ENCODE measurements at regions of chr17 and their contacts with region 1.

Region 1: DNA sequence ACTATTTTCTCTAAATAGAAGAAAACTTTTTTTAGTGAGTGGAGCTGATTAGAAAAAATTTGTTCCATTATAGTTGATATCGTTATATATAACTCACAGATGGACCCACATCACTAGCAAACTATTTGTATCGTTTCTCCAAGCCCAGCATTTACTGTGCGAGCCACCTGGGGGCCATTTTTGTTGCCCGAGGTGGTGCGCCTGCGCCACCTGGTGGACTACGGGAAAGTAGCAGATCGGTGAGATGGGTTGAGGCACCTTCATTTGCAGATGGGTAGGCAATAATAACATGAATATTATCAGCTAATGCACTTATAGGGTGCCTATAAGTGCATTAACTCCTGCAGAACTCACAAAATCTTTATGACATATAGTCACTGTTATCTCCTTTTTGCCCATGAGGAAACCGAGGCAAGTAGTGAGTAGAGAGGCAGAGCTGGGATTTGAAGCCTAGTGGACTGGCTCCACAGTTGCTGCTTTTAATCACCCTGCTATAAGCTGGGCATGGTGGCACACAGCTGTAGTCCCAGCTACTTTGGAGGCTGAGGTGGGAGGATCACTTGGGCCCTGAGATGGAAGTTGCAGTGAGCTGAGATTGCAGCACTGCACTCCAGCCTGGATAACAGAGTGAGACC is 23.2 kb upstream of the NTN1 start:
- DNase-seq: peak; percentile 61 to 90 (median 80)
- ATAC-seq: peak; percentile 85
- H3K4me3 ChIP-seq: no peak overlapping the region
- H3K4me3 Mint-ChIP-seq: no peak overlapping the region
- H3K27ac ChIP-seq: no peak overlapping the region
- H3K27ac Mint-ChIP-seq: no peak overlapping the region
- H3K4me1 ChIP-seq: peaks cover 5% of the 10 kb centered on the region
- H3K4me1 Mint-ChIP-seq: peaks cover 12% of the 10 kb centered on the region
- H3K27me3 ChIP-seq: peaks cover 7 to 14% of the 10 kb centered on the region in 2 experiments
- H3K27me3 Mint-ChIP-seq: peaks cover 32% of the 10 kb centered on the region
- CTCF ChIP-seq: peak; percentile 99

Region 2: DNA sequence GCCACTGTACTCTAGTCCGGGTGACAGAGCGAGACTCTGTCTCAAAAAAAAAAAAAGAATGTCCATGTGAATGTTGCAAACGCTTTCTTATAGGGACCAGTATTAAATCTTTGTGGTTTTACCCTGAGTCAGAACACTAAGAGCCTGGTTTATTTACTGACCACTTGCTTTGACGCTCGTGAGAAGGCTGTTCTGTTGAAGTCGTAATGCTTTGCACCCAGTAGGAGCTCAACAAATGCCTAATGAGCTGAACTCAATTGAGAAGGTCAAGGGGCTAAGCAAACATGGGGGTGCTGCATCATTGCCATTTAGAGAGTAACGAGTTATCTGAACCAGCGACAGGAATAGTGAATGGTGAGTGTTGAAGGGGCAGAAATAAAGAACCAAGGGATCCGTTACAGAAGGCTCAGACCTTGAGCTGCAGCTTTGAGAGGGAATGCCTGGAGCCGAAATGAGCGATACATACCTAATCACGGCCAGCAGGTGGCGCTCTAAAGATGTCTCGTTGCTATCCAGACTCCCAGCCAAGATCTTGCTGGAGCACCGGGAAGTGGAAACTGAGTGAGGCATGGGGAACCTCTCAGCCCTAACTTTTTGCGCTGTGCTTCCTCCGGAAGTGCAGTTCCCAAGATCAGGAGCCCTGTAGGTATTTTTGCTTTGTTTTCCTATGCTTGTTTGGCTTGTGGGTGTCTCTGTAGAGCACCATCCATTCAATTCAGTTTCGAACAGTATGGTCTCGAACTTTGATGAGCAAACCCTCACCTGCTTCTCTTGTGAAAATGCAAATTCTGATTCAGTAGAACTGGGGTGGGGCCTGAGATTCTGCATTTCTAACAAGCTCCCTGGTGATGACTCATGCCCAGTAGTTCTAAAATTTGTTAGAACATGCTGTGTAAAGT is 587.9 kb before region 1 on chr17:
- CTCF ChIA-PET with region 1: interaction called, 13 read pairs
- POLR2A ChIA-PET with region 1: no interaction called
- intact Hi-C with region 1: loop called (anchors 1 to 10 kb)
- DNase-seq: peak; percentile 47 to 88 (median 82)
- ATAC-seq: peak; percentile 92
- H3K4me3 ChIP-seq: no peak overlapping the region
- H3K4me3 Mint-ChIP-seq: no peak overlapping the region
- H3K27ac ChIP-seq: no peak overlapping the region
- H3K27ac Mint-ChIP-seq: no peak overlapping the region
- H3K4me1 ChIP-seq: peaks cover 3% of the 10 kb centered on the region
- H3K4me1 Mint-ChIP-seq: peaks cover 12% of the 10 kb centered on the region
- H3K27me3 ChIP-seq: peaks cover 0 to 3% of the 10 kb centered on the region in 2 experiments
- H3K27me3 Mint-ChIP-seq: peaks cover 9% of the 10 kb centered on the region
- CTCF ChIP-seq: peak; percentile 86

Region 3: DNA sequence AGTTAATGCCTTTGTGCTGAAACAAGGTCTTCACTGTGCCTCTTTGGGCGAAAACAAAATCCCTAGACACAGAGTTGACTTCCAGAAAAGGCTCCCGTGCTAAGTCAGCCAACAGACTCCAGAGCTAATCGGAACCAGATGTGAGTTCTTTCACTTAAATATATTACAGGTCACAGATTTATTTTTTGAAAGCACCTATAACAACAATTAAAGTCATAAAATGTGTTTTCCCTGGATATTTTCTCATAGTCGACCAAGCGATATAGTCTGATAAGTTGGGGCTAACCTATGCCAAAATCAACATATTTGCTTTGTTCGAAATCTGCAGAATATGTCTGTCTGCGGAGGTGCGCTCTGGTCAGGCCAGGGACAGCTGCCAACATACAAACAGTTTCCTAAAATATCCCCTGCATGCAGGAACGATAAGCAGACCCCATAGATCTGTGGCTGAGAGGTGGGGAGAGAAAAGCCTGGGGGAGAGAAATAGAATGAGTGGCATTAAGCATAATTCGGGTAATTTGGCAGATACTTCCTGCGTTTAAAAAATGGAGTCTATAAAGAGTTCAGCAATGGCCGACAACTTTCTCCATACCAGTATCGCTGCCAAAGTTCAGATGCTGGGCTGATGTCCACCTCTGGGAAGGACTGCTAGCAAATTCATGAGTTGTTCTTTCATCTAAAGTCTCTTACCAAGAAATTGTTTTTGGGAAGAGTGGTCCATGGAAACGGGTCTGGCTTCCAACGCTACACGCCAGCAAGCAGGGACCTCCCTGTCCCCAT is 316.8 kb before region 1 on chr17:
- CTCF ChIA-PET with region 1: no interaction called
- POLR2A ChIA-PET with region 1: no interaction called
- intact Hi-C with region 1: no loop called
- DNase-seq: no peak
- ATAC-seq: no peak
- H3K4me3 ChIP-seq: no peak overlapping the region
- H3K4me3 Mint-ChIP-seq: no peak overlapping the region
- H3K27ac ChIP-seq: no peak overlapping the region
- H3K27ac Mint-ChIP-seq: no peak overlapping the region
- H3K4me1 ChIP-seq: no peaks in the 10 kb centered on the region
- H3K4me1 Mint-ChIP-seq: no peaks in the 10 kb centered on the region
- H3K27me3 ChIP-seq: no peaks in the 10 kb centered on the region
- H3K27me3 Mint-ChIP-seq: peaks cover 18% of the 10 kb centered on the region
- CTCF ChIP-seq: no peak

Region 4: DNA sequence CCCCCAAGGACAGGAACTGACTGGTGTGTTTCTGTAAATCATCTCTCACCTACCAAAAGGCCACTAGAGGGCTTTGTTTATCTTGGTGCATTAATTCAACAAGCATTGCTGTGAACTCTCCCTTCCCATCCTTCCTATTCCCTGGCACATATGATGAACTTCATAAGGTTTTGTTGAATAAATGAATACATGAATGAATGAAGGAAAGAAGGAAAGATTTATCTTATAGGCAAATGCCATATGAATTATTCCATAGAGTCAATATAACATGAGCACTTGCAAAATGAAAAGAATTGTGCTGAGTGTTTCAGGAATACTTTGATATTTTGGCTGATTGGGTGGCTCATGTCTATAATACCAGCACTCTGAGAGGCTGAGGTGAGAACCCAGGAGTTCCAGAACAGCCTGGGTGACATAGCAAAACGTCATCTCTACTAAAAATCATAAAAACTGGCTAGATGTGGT is 244.1 kb before region 1 on chr17:
- CTCF ChIA-PET with region 1: interaction called, 9 read pairs
- POLR2A ChIA-PET with region 1: no interaction called
- intact Hi-C with region 1: loop called (anchors 1 to 2 kb)
- DNase-seq: peak in 2 of 9 experiments; percentile 19 to 40
- ATAC-seq: no peak
- H3K4me3 ChIP-seq: no peak overlapping the region
- H3K4me3 Mint-ChIP-seq: no peak overlapping the region
- H3K27ac ChIP-seq: no peak overlapping the region
- H3K27ac Mint-ChIP-seq: no peak overlapping the region
- H3K4me1 ChIP-seq: no peaks in the 10 kb centered on the region
- H3K4me1 Mint-ChIP-seq: no peaks in the 10 kb centered on the region
- H3K27me3 ChIP-seq: no peaks in the 10 kb centered on the region
- H3K27me3 Mint-ChIP-seq: peaks cover 13% of the 10 kb centered on the region
- CTCF ChIP-seq: no peak

Region 5: GRCh38 chr17:8806926-8807550 is 191.1 kb before region 1 on chr17:
- CTCF ChIA-PET with region 1: interaction called, 16 read pairs
- POLR2A ChIA-PET with region 1: no interaction called
- intact Hi-C with region 1: loop called in 1 of 2 experiments (anchors 5 kb)
- DNase-seq: peak in 1 of 9 experiments; percentile 45
- ATAC-seq: peak; percentile 31
- H3K4me3 ChIP-seq: no peak overlapping the region
- H3K4me3 Mint-ChIP-seq: no peak overlapping the region
- H3K27ac ChIP-seq: no peak overlapping the region
- H3K27ac Mint-ChIP-seq: no peak overlapping the region
- H3K4me1 ChIP-seq: no peaks in the 10 kb centered on the region
- H3K4me1 Mint-ChIP-seq: peaks cover 7% of the 10 kb centered on the region
- H3K27me3 ChIP-seq: no peaks in the 10 kb centered on the region
- H3K27me3 Mint-ChIP-seq: no peaks in the 10 kb centered on the region
- CTCF ChIP-seq: no peak

Region 6: GRCh38 chr17:8900626-8901585 is 97.2 kb before region 1 on chr17:
- CTCF ChIA-PET with region 1: interaction called, 50 read pairs
- POLR2A ChIA-PET with region 1: interaction called, 3 read pairs
- intact Hi-C with region 1: loop called in 1 of 2 experiments (anchors 2 kb)
- DNase-seq: peak in 5 of 9 experiments; percentile 21 to 60 (median 49)
- ATAC-seq: no peak
- H3K4me3 ChIP-seq: no peak overlapping the region
- H3K4me3 Mint-ChIP-seq: peak overlapping the region; percentile 29
- H3K27ac ChIP-seq: peak overlapping the region in 1 of 2 experiments; percentile 90
- H3K27ac Mint-ChIP-seq: peak overlapping the region; percentile 93
- H3K4me1 ChIP-seq: peaks cover 58% of the 10 kb centered on the region
- H3K4me1 Mint-ChIP-seq: peaks cover 59% of the 10 kb centered on the region
- H3K27me3 ChIP-seq: no peaks in the 10 kb centered on the region
- H3K27me3 Mint-ChIP-seq: no peaks in the 10 kb centered on the region
- CTCF ChIP-seq: no peak

Region 7: GRCh38 chr17:8976638-8977037 is 21.5 kb before region 1 on chr17:
- CTCF ChIA-PET with region 1: interaction called, 15 read pairs
- POLR2A ChIA-PET with region 1: no interaction called
- intact Hi-C with region 1: no loop called
- DNase-seq: no peak
- ATAC-seq: no peak
- H3K4me3 ChIP-seq: no peak overlapping the region
- H3K4me3 Mint-ChIP-seq: no peak overlapping the region
- H3K27ac ChIP-seq: no peak overlapping the region
- H3K27ac Mint-ChIP-seq: no peak overlapping the region
- H3K4me1 ChIP-seq: no peaks in the 10 kb centered on the region
- H3K4me1 Mint-ChIP-seq: no peaks in the 10 kb centered on the region
- H3K27me3 ChIP-seq: no peaks in the 10 kb centered on the region
- H3K27me3 Mint-ChIP-seq: no peaks in the 10 kb centered on the region
- CTCF ChIP-seq: no peak

Region 8: GRCh38 chr17:9009737-9010136 is 11.6 kb after region 1 on chr17:
- CTCF ChIA-PET with region 1: interaction called, 37 read pairs
- POLR2A ChIA-PET with region 1: no interaction called
- intact Hi-C with region 1: no loop called
- DNase-seq: no peak
- ATAC-seq: no peak
- H3K4me3 ChIP-seq: no peak overlapping the region
- H3K4me3 Mint-ChIP-seq: no peak overlapping the region
- H3K27ac ChIP-seq: no peak overlapping the region
- H3K27ac Mint-ChIP-seq: no peak overlapping the region
- H3K4me1 ChIP-seq: no peaks in the 10 kb centered on the region
- H3K4me1 Mint-ChIP-seq: peaks cover 2% of the 10 kb centered on the region
- H3K27me3 ChIP-seq: peaks cover 11 to 13% of the 10 kb centered on the region in 2 experiments
- H3K27me3 Mint-ChIP-seq: peaks cover 69% of the 10 kb centered on the region
- CTCF ChIP-seq: no peak

Measured in CD8-positive, alpha-beta T cell (primary cell).